Common myeloid progenitor, CD34-positive (primary cell): ENCODE measurements at regions of chr2 and their contacts with region 1.

Region 1: GRCh38 chr2:171323971-171324528 is 109.7 kb downstream of the METTL8 start:
- DNase-seq: no peak
- H3K4me3 ChIP-seq: no peak overlapping the region
- H3K27ac ChIP-seq: no peak overlapping the region
- H3K4me1 ChIP-seq: peaks cover 10 to 29% (median 18%) of the 10 kb centered on the region in 4 experiments
- H3K27me3 ChIP-seq: no peaks in the 10 kb centered on the region

Region 2: DNA sequence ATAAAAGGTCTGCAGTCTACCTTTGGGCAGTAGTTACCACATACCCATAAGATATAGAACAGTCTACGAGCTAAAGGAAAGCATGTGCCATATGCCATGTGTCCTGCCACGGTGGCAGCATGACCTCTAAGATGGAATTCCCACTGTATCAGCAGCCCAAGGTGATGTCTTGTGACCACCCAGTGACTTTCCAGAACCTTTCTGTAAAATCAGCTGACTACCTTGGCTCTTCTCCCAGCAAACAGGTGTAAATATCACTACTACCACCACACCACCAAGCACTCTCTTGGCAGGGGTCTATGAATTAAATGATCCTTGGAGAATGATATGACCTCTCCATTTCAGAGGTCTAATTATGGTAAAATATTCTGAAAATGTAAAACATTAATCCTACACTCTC is 10.1 kb after region 1 on chr2:
- CTCF ChIA-PET with region 1: interaction called, 10 read pairs
- POLR2A ChIA-PET with region 1: no interaction called
- DNase-seq: no peak
- H3K4me3 ChIP-seq: no peak overlapping the region
- H3K27ac ChIP-seq: no peak overlapping the region
- H3K4me1 ChIP-seq: peaks cover 0 to 3% (median 0%) of the 10 kb centered on the region in 4 experiments
- H3K27me3 ChIP-seq: no peaks in the 10 kb centered on the region

Region 3: DNA sequence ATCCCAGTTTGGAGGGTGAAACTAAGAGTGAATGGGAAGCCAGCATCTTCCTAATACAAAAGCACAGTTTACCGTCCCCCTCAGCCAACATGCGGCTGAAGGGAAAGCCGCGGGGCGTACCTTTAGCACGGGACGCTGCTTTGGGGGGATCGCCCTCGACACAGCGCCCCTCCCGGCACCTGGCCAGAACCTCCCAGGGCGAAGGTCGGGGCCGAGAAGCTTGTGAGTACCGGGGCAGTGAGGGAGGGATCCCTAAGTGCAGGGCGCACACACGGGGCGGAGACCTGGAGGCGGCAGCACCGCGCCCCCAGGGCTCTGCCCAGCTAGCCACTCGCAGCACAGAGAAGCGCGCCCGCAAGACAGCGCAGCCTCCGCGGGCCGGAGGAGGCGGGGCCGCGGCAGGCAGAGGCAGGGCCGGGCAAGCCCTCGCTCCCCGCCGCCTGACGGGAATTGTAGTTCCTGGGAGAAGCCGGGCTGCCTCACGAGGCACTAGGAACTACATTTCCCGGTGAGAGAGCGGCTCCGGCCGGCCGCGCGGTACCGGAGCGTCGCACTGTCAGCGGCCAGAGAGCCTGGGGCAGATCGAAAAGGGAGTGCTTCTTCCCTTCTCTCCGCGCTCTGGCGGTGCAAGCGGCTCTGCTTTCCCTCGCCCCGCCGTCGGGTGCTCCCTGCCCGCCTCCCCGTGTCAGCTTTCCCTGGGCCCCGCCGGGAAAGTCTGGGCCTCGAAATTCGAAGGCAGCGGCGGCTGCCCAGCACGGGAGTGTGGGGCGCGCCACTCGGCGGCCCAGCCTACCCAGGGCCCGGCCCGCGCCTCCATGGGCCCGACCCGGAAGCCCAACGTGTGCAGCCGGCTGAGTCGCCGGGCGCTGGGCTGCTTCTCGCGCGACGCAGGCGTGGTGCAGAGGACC is 110.0 kb after region 1 on chr2 and contains the starts of genes DCAF17 and METTL8:
- CTCF ChIA-PET with region 1: no interaction called
- POLR2A ChIA-PET with region 1: no interaction called
- DNase-seq: peak; percentile 97 to 99 (median 99)
- H3K4me3 ChIP-seq: peak within 1 kb of the TSS; percentile 77 to 91 (median 83)
- H3K27ac ChIP-seq: peak within 1 kb of the TSS; percentile 70 to 89
- H3K4me1 ChIP-seq: peaks cover 8 to 25% (median 15%) of the 10 kb centered on the region in 4 experiments
- H3K27me3 ChIP-seq: no peaks in the 10 kb centered on the region

Region 4: DNA sequence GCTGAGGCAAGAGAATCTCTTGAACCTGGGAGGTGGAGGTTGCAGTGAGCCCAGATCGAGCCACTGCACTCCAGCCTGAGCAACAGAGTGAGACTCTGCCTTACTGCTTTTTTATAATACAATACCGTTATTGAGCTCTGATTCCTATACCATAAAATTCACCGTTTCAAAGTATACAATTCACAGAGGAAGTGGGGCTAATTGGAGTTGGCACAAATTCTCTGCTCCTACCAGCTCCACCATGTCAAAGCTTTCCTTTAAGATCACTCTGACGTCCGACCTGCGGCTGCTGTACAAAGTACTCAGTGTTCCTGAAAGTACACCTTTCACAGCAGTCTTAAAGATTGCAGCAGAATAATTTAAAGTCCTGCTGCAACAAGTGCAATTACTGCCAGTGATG is 168.6 kb after region 1 on chr2:
- CTCF ChIA-PET with region 1: no interaction called
- POLR2A ChIA-PET with region 1: no interaction called
- DNase-seq: no peak
- H3K4me3 ChIP-seq: no peak overlapping the region
- H3K27ac ChIP-seq: no peak overlapping the region
- H3K4me1 ChIP-seq: no peaks in the 10 kb centered on the region
- H3K27me3 ChIP-seq: no peaks in the 10 kb centered on the region